A673 (cell line): ENCODE measurements at regions of chr3 and their contacts with region 1.

Region 1: DNA sequence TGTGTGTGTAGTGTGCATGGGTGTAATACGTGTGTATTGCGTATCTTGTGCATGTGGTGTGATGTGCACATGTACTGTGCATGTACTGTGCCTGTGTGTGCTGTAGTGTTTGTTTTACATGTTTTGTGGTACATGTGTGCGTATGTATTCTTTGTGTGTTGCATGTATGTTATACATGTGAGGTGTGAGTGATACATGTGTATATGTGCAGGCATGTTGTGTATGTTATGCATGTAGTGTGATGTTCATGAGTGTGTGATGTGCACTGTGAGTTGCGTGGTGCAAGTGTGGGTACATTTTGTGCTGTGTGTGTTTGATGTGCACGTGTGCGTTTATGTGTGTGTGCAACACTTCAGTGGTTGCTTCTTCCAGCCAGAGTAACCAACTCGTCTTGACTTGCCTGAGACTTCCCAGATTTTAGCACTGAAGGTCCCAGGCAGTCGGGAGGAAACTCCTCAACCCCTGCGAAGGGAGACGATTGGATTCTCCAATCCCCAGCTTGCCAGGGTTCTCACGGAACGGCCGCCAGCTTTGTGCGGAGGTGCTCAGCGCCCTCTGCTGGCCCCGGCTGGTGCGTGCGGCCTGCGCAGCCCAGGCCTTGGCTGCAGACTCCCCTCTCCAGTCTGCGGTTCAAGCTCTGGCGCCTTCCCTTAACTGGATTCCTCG is 3.6 kb downstream of the GALNT15 start:
- DNase-seq: peak; percentile 78
- H3K4me3 ChIP-seq: no peak overlapping the region
- H3K27ac ChIP-seq: no peak overlapping the region
- H3K4me1 ChIP-seq: no peaks in the 10 kb centered on the region
- H3K27me3 ChIP-seq: peaks cover 35% of the 10 kb centered on the region
- CTCF ChIP-seq: peak; percentile 96

Region 2: GRCh38 chr3:15361494-15362212 is 816.4 kb before region 1 on chr3:
- CTCF ChIA-PET with region 1: no interaction called
- POLR2A ChIA-PET with region 1: no interaction called
- intact Hi-C with region 1: no loop called
- DNase-seq: no peak
- H3K4me3 ChIP-seq: no peak overlapping the region
- H3K27ac ChIP-seq: no peak overlapping the region
- H3K4me1 ChIP-seq: peaks cover 14% of the 10 kb centered on the region
- H3K27me3 ChIP-seq: no peaks in the 10 kb centered on the region
- CTCF ChIP-seq: no peak

Region 3: GRCh38 chr3:15629860-15630597 is 548.1 kb before region 1 on chr3:
- CTCF ChIA-PET with region 1: no interaction called
- POLR2A ChIA-PET with region 1: no interaction called
- intact Hi-C with region 1: loop called (anchors 5 kb)
- DNase-seq: peak; percentile 87
- H3K4me3 ChIP-seq: peak overlapping the region; percentile 20
- H3K27ac ChIP-seq: no peak overlapping the region
- H3K4me1 ChIP-seq: peaks cover 22% of the 10 kb centered on the region
- H3K27me3 ChIP-seq: no peaks in the 10 kb centered on the region
- CTCF ChIP-seq: peak; percentile 84

Region 4: DNA sequence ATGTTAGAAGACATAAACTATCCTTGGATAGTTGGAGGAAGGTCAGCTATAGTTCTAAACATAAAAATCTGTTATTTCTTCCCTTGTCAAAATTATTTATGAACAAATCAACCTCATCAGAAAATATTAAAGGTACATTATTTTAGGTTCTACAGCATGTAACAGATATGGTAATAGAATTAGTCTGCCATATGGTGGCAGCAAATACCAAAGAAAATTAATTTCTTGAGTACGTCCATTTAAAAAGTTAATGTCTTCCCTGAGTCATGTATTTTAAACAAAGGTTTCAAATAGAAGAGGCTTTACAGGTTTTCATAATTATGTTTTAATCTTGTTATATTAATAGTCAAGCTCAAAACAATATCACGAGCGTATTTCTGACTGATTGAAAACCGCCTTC is 362.4 kb before region 1 on chr3:
- CTCF ChIA-PET with region 1: interaction called, 5 read pairs
- POLR2A ChIA-PET with region 1: no interaction called
- intact Hi-C with region 1: loop called (anchors 2 kb)
- DNase-seq: peak; percentile 64
- H3K4me3 ChIP-seq: no peak overlapping the region
- H3K27ac ChIP-seq: no peak overlapping the region
- H3K4me1 ChIP-seq: no peaks in the 10 kb centered on the region
- H3K27me3 ChIP-seq: no peaks in the 10 kb centered on the region
- CTCF ChIP-seq: peak; percentile 56

Region 5: DNA sequence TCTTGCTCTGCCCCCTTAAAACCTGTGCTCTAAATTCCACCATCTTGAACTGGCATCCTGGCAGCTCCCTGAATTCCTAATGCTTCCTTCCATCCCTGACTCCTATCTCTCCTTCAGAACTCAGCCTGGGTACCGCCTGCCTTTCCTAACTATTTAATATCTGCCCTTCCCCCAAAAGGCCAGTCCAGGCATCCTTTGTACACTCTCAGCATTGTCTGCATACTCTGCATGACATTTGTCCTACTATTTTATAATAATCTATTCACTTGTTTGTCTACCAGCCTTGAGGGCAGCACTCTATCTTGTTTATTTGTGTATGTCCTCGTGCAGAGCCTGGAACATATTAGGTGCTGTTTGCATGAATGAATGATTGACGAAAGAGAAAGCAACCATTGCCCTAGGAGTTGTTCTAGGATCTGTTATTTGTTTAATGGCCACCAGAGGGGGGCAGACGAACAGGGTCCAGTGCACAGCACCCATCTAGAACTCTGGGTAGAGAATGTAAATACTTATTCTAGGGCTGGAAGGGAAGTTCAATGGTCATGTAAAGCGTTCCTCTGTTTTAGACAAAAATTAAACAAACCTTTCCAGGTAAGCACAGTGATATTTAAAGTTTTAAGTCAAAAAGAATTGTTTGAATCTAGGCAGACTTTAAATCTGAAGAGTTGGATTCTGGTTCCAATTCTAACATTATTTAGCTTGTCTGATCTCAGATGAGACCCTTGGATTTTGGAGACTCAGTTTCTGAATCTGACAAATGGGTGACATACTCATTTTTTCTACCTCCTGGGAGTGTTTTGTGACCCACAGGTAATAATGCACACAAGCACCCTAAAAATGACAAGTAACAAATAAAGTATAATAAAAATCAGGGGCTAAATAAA is 129.4 kb before region 1 on chr3:
- CTCF ChIA-PET with region 1: interaction called, 13 read pairs
- POLR2A ChIA-PET with region 1: no interaction called
- intact Hi-C with region 1: loop called (anchors 1 kb)
- DNase-seq: peak; percentile 75
- H3K4me3 ChIP-seq: peak overlapping the region; percentile 22
- H3K27ac ChIP-seq: no peak overlapping the region
- H3K4me1 ChIP-seq: no peaks in the 10 kb centered on the region
- H3K27me3 ChIP-seq: no peaks in the 10 kb centered on the region
- CTCF ChIP-seq: peak; percentile 80

Region 6: GRCh38 chr3:16247276-16248061 is 69.4 kb after region 1 on chr3:
- CTCF ChIA-PET with region 1: interaction called, 3 read pairs
- POLR2A ChIA-PET with region 1: no interaction called
- intact Hi-C with region 1: loop called (anchors 2 kb)
- DNase-seq: peak; percentile 85
- H3K4me3 ChIP-seq: no peak overlapping the region
- H3K27ac ChIP-seq: no peak overlapping the region
- H3K4me1 ChIP-seq: no peaks in the 10 kb centered on the region
- H3K27me3 ChIP-seq: no peaks in the 10 kb centered on the region
- CTCF ChIP-seq: peak; percentile 97